CD4-positive, alpha-beta memory T cell (primary cell): ENCODE measurements at regions of chr2 and their contacts with region 1.

Region 1: DNA sequence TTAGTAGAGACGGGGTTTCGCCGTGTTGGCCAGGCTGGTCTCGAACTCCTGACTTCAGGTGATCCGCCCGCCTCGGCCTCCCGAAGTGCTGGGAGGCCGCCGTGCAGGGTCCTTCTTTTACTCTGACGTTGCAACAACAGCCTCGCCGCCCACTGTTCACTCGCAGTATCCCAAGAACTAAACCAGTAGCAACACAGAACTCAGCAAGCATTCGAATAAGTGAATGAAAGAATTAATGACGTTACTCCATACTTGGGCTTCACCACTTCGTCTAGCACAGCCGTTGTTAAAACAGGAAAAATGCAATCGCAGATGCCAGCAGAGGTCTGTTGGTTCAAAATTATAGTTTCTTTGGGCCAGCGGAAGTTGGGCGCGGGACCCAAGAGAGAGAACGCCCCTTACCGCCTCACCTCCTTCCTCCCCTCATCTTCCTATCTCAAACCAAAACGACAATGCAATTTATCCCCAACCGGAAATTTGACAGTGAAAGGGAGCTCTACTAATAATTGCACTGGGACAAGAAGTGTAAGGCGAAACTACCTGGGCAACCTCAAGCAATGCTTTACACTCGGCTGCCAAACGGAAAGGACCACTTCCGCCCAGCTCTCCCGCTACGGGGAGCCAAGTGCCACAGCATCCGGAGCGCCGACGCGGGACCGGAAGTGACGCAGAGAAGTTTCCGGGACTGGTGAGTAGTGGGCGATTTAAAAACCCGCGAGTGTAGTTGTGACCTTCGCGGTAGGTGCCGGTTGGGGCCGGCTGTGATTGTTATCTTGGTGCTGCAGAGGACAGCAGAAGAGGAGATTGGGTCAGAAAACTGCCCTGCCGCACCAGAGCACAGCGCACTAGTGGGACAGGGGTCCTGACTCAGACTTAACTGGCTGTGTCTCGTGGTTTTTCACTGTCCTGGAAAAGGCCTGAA is at the starts of genes NIF3L1 and PPIL3:
- DNase-seq: peak; percentile 96 to 98 (median 96)
- H3K4me3 ChIP-seq: peak within 1 kb of the TSS; percentile 91 to 92
- H3K4me3 Mint-ChIP-seq: peak within 1 kb of the TSS; percentile 90 to 98 (median 96)
- H3K27ac ChIP-seq: peak within 1 kb of the TSS; percentile 85
- H3K27ac Mint-ChIP-seq: peak within 1 kb of the TSS; percentile 98 to 100 (median 99)
- H3K4me1 ChIP-seq: peaks cover 31% of the 10 kb centered on the region
- H3K4me1 Mint-ChIP-seq: peaks cover 30 to 57% (median 45%) of the 10 kb centered on the region in 4 donors
- H3K27me3 ChIP-seq: no peaks in the 10 kb centered on the region
- H3K27me3 Mint-ChIP-seq: no peaks in the 10 kb centered on the region
- total RNA-seq, gene NIF3L1: 30.0 to 30.3 TPM
- total RNA-seq, gene PPIL3: 48.0 to 57.7 TPM

Region 2: DNA sequence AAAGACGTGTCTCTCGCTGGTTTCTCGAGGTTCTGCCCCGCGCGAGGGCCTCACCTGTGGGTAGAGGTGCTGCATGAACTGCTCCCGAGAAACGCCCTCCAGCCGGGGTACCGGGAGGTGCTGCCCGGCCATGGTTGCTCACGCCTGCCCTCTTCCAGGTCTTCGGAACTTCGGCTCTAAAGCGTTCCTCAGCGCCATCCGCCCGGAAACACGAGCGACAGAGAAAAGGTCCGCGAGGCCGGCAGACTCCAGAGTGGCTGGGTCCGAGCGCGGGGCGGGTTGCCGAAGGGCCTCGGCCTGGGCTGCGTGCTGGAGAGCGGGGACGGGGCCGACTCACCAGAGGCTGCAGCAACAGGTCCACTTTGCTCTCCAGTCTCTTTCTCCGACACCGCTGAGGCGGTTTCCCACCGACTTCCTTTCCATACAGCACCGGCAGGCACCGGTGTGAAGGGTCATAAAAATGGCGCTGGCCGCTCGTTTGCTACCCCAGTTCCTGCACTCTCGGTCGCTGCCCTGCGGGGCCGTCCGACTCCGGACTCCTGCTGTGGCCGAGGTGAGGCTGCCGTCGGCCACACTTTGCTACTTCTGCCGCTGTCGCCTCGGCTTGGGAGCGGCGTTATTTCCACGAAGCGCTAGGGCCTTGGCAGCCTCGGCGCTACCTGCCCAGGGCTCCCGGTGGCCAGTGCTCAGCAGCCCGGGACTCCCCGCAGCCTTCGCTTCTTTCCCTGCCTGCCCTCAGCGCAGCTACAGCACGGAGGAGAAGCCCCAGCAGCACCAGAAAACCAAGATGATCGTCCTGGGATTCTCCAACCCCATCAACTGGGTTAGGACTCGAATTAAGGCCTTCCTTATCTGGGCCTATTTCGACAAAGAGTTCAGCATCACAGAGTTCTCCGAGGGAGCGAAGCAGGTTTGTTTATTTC is 933.4 kb before region 1 on chr2 and contains the starts of genes MAIP1 and TYW5:
- CTCF ChIA-PET with region 1: no interaction called
- POLR2A ChIA-PET with region 1: no interaction called
- intact Hi-C with region 1: loop called (anchors 1 kb)
- DNase-seq: peak; percentile 77 to 84 (median 82)
- H3K4me3 ChIP-seq: peak within 1 kb of the TSS; percentile 81 to 97
- H3K4me3 Mint-ChIP-seq: peak within 1 kb of the TSS; percentile 97 to 99 (median 98)
- H3K27ac ChIP-seq: peak within 1 kb of the TSS; percentile 71
- H3K27ac Mint-ChIP-seq: peak within 1 kb of the TSS; percentile 93 to 96 (median 95)
- H3K4me1 ChIP-seq: peaks cover 53% of the 10 kb centered on the region
- H3K4me1 Mint-ChIP-seq: peaks cover 29 to 73% (median 50%) of the 10 kb centered on the region in 4 donors
- H3K27me3 ChIP-seq: no peaks in the 10 kb centered on the region
- H3K27me3 Mint-ChIP-seq: no peaks in the 10 kb centered on the region
- total RNA-seq, gene MAIP1: 13.1 to 15.9 TPM
- total RNA-seq, gene TYW5: 11.0 to 11.6 TPM

Region 3: DNA sequence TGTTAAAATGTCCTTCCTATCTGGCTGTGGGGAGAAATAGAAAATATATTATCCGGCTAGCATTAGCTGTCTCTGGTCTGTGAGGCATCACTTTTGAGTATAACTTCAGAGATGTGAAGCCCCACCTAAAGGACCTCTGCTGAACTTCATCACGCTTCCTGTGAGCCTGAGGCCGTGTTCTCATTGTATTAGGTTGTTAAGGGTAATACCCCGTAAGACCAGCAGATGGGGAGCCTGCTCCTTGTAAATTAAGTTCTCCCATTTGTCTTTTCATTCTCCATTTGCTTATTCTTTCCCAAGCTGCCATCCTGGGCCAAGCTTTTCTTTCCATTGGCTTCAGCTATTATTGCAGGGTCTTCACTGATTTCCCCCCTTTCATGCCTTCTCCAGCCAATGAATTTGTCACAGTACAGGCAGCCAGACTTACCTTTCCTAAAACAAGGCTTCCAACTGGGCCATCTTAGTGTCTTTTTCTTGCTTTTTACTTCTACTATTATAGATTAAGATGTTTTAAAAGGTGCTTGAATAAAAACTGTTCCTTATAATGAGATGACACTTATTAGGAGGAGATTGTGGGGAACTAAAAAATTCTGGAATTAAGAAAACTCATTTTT is 12.6 kb after region 1 on chr2:
- CTCF ChIA-PET with region 1: interaction called, 8 read pairs
- POLR2A ChIA-PET with region 1: interaction called, 11 read pairs
- intact Hi-C with region 1: loop called (anchors 1 kb)
- DNase-seq: peak; percentile 76 to 83 (median 79)
- H3K4me3 ChIP-seq: no peak overlapping the region
- H3K4me3 Mint-ChIP-seq: no peak overlapping the region
- H3K27ac ChIP-seq: peak overlapping the region; percentile 1
- H3K27ac Mint-ChIP-seq: peak overlapping the region; percentile 10 to 81 (median 65)
- H3K4me1 ChIP-seq: no peaks in the 10 kb centered on the region
- H3K4me1 Mint-ChIP-seq: peaks cover 6 to 7% (median 6%) of the 10 kb centered on the region in 4 donors
- H3K27me3 ChIP-seq: no peaks in the 10 kb centered on the region
- H3K27me3 Mint-ChIP-seq: no peaks in the 10 kb centered on the region

Region 4: DNA sequence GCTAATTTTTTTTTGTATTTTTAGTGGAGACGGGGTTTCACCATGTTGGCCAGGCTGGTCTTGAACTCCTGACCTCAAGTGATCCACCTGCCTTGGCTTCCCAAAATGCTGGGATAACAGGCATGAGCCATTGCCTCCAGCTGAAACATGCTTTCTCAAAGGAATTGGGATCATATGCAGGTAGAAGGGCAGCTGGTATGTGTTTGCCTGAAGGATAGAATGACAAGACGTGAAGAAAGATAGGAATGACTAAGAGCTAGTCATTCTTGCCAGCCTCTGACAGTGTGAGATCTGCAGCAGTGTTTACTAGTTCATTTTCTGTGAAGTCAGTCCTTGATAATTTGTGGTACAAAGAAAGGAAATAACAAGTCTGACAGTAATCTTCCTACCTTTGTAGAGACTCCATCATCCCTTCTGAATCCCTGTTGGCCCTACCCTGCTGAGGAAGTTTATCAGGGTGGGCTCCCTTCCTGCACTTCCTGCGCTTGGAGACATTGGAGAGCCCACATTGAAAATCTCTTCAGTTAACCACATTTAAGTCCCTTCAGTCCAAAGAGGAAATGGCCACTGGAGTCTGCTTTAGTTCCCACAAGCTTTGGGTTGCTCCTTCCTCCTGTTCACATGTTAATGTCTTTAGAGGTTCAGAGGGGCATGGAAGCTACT is 241.7 kb after region 1 on chr2:
- CTCF ChIA-PET with region 1: interaction called, 3 read pairs
- POLR2A ChIA-PET with region 1: interaction called, 10 read pairs
- intact Hi-C with region 1: no loop called
- DNase-seq: peak; percentile 42 to 85 (median 55)
- H3K4me3 ChIP-seq: peak overlapping the region in 1 of 2 donors; percentile 34
- H3K4me3 Mint-ChIP-seq: peak overlapping the region; percentile 72 to 86 (median 80)
- H3K27ac ChIP-seq: peak overlapping the region; percentile 64
- H3K27ac Mint-ChIP-seq: peak overlapping the region; percentile 87 to 98 (median 97)
- H3K4me1 ChIP-seq: peaks cover 89% of the 10 kb centered on the region
- H3K4me1 Mint-ChIP-seq: peaks cover 64 to 81% (median 72%) of the 10 kb centered on the region in 4 donors
- H3K27me3 ChIP-seq: no peaks in the 10 kb centered on the region
- H3K27me3 Mint-ChIP-seq: no peaks in the 10 kb centered on the region